ENCODE measurements at regions of chr3 and their contacts with region 1.

Region 1: DNA sequence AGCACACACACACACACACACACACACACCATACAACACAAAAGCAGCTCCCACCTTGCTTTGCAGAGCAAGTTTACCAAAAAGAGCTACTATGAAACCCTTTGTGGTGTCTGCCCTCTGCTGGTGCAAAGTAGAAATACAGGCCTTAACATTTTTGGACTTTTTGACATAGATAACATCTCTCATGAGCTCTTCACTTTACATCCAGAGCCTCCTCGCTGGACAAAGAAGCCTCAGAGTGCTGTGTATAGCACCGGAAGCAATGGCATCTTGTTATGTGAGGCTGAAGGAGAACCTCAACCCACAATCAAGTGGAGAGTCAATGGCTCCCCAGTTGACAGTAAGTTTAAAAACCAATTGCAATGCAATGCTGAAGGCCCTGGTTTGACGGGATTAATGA is 157.9 kb downstream of the CHL1 start:
- DNase-seq: peak; percentile 85
- ATAC-seq: peak; percentile 37
- H3K4me3 ChIP-seq: no peak overlapping the region
- H3K27ac ChIP-seq: no peak overlapping the region
- H3K4me1 ChIP-seq: peaks cover 24% of the 10 kb centered on the region
- H3K27me3 ChIP-seq: no peaks in the 10 kb centered on the region
- CTCF ChIP-seq: peak; percentile 90

Region 2: DNA sequence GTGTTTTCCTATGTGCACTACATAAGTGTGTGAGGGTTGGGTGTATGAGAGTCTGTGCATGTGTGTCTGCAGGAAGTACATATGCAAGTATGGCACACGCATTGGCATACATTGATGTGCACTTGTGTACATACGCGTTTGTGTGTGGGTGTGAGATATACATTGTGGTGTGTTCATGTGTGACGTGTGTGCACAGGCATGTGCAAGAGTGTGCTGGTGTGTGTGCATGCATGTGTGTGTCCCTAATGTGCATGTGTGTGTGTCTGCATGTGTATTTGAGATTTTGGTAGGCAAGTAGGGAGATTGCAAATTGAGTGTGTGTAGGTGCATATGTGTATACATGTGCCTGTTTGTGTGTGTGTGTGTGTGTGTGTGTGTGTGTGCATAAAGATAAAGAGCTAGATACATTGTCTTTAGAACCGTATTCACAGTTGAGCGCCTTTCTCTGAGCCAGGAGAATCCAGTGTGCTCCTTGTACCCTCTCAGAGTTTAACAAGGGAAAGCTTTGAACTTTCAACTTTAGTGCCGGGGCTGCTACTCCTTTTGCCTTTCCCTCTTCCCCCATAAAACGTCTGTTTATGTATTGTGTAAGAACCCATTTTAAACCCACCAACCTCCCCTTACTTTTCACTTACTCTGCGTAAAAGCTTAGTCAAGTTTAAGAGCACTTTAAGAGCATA is 310.3 kb before region 1 on chr3:
- CTCF ChIA-PET with region 1: interaction called, 3 read pairs
- POLR2A ChIA-PET with region 1: no interaction called
- intact Hi-C with region 1: loop called (anchors 1 kb)
- DNase-seq: no peak
- ATAC-seq: no peak
- H3K4me3 ChIP-seq: no peak overlapping the region
- H3K27ac ChIP-seq: no peak overlapping the region
- H3K4me1 ChIP-seq: no peaks in the 10 kb centered on the region
- H3K27me3 ChIP-seq: no peaks in the 10 kb centered on the region
- CTCF ChIP-seq: no peak

Region 3: GRCh38 chr3:377158-377561 is 22.7 kb after region 1 on chr3:
- CTCF ChIA-PET with region 1: no interaction called
- POLR2A ChIA-PET with region 1: no interaction called
- intact Hi-C with region 1: loop called (anchors 1 kb)
- DNase-seq: peak; percentile 84
- ATAC-seq: peak; percentile 83
- H3K4me3 ChIP-seq: no peak overlapping the region
- H3K27ac ChIP-seq: 0 out of 2 replicates have a peak overlapping the region, but pooled peaks have one; percentile 16
- H3K4me1 ChIP-seq: peaks cover 40% of the 10 kb centered on the region
- H3K27me3 ChIP-seq: no peaks in the 10 kb centered on the region
- CTCF ChIP-seq: peak; percentile 83